ENCODE measurements at regions of chr2 and their contacts with region 1.

Region 1: DNA sequence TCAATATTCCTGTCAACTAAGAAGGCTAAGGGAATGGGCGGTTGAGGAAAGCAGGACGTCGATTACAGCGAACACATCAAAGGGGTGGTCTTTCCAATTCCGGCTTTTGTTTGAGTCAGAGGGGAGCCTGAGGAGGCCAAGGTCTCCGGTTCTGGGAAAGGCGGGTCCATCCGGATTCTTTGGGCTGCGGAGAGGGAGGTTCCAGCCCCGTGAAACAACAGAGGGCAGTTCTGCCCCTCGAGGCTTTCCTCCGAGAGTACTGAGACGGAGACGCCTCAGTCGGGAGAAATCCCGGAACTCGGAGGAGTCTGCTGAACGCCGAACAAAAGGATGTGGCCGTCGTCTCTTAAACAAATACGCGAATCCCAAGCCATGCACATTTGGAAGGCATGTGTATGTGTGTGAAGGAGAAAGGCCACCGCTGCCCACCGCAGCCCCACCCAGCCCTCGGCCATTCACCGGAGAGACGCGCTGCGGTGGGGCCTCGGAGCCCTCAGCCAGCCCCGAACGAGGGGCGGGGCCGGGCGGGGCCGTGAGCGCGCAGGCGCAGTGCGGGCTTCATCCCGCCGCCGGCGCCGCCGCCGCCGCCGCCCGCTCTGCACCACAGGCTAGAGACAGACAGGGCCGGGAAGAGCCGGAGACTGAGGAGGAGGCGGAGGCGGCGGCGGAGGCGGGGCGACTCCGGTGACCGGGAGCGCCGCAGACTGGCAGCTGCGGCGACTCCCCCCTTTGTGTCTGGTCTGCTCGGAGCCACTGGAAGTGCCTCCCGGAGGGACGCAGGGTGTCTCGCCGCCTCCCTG is at the start of gene BMPR2:
- DNase-seq: peak; percentile 89
- H3K4me3 ChIP-seq: peak within 1 kb of the TSS; percentile 94
- H3K27ac ChIP-seq: peak within 1 kb of the TSS; percentile 99
- H3K4me1 ChIP-seq: peaks cover 49% of the 10 kb centered on the region
- H3K27me3 ChIP-seq: no peaks in the 10 kb centered on the region
- CTCF ChIP-seq: no peak
- total RNA-seq, gene BMPR2: 51.7 TPM

Region 2: GRCh38 chr2:202289394-202290204 is 86.2 kb before region 1 on chr2:
- intact Hi-C with region 1: loop called (anchors 10 kb)
- DNase-seq: no peak
- H3K4me3 ChIP-seq: no peak overlapping the region
- H3K27ac ChIP-seq: no peak overlapping the region
- H3K4me1 ChIP-seq: no peaks in the 10 kb centered on the region
- H3K27me3 ChIP-seq: no peaks in the 10 kb centered on the region
- CTCF ChIP-seq: no peak

Measured in left ventricle myocardium inferior (tissue), 1 donor.